Naive thymus-derived CD4-positive, alpha-beta T cell (primary cell): ENCODE measurements at regions of chr7 and their contacts with region 1.

Region 1: DNA sequence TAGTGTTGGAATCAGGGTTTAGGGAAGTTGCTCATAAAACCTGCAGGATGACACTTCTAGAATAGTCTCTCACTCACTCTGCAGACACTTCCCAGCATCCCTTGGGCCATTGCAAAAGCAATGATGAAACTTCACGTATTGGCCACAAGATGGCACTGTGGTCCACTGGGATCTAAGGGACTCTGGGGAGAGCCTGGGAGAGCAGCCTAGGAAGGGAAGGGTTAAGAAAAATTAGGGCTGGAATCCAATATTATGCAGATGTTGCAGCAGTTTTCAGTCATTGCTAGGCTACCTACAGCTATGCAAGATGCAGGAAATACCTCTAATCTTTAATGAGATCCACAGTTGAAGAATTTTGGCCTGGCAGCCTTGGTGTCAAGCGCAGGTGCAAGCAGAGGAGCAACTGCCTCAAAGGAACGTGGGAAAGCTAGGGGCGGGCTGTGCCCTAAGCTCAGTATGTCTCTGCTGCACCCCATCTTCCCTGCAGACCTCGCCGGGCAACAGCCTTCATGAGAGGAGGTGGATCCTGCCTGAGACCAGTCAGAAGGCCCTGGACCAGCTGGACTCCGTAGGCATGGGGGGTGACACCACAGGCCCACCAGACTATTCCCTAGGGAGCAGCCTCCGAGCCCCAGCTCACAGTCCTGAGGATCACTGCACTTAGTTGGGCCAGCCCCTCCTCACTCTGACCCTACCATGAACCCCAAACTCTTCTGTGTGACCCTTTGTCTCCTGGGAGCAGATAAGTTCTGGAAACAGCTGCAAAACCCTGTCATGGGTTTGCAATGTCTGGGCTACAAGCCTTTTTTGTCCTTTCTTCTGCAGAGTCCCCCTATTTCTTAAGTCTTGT is 127.9 kb upstream of the PRSS58 start:
- DNase-seq: peak in 5 of 9 donors; percentile 31 to 45 (median 39)
- ATAC-seq: peak; percentile 80
- H3K4me3 ChIP-seq: no peak overlapping the region
- H3K4me3 Mint-ChIP-seq: peak overlapping the region in 8 of 10 donors; percentile 1 to 75 (median 26)
- H3K27ac ChIP-seq: no peak overlapping the region
- H3K27ac Mint-ChIP-seq: peak overlapping the region in 3 of 9 donors; percentile 61 to 67 (median 63)
- H3K4me1 ChIP-seq: peaks cover 0 to 16% of the 10 kb centered on the region in 2 donors
- H3K4me1 Mint-ChIP-seq: peaks cover 22 to 38% (median 29%) of the 10 kb centered on the region in 7 donors
- H3K27me3 ChIP-seq: no peaks in the 10 kb centered on the region
- H3K27me3 Mint-ChIP-seq: no peaks in the 10 kb centered on the region

Region 2: GRCh38 chr7:142331941-142332340 is 53.8 kb before region 1 on chr7:
- CTCF ChIA-PET with region 1: no interaction called
- POLR2A ChIA-PET with region 1: no interaction called
- intact Hi-C with region 1: no loop called
- DNase-seq: no peak
- ATAC-seq: no peak
- H3K4me3 ChIP-seq: no peak overlapping the region
- H3K4me3 Mint-ChIP-seq: peak overlapping the region in 2 of 10 donors; percentile 20 to 55
- H3K27ac ChIP-seq: no peak overlapping the region
- H3K27ac Mint-ChIP-seq: no peak overlapping the region
- H3K4me1 ChIP-seq: no peaks in the 10 kb centered on the region
- H3K4me1 Mint-ChIP-seq: peaks cover 0 to 9% (median 0%) of the 10 kb centered on the region in 7 donors
- H3K27me3 ChIP-seq: no peaks in the 10 kb centered on the region
- H3K27me3 Mint-ChIP-seq: peaks cover 7 to 27% (median 19%) of the 10 kb centered on the region in 5 donors

Region 3: GRCh38 chr7:142357953-142358520 is 27.7 kb before region 1 on chr7:
- CTCF ChIA-PET with region 1: interaction called, 6 read pairs
- POLR2A ChIA-PET with region 1: interaction called, 4 read pairs
- intact Hi-C with region 1: loop called (anchors 1 to 2 kb)
- DNase-seq: peak in 8 of 9 donors; percentile 29 to 56 (median 44)
- ATAC-seq: peak; percentile 71
- H3K4me3 ChIP-seq: no peak overlapping the region
- H3K4me3 Mint-ChIP-seq: peak overlapping the region in 2 of 10 donors; percentile 21 to 26
- H3K27ac ChIP-seq: no peak overlapping the region
- H3K27ac Mint-ChIP-seq: peak overlapping the region in 5 of 9 donors; percentile 10 to 68 (median 35)
- H3K4me1 ChIP-seq: peaks cover 0 to 30% of the 10 kb centered on the region in 2 donors
- H3K4me1 Mint-ChIP-seq: peaks cover 13 to 58% (median 47%) of the 10 kb centered on the region in 7 donors
- H3K27me3 ChIP-seq: no peaks in the 10 kb centered on the region
- H3K27me3 Mint-ChIP-seq: peaks cover 0 to 39% (median 0%) of the 10 kb centered on the region in 5 donors